HepG2 (cell line): ENCODE measurements at regions of chr14 and their contacts with region 1.

Region 1: DNA sequence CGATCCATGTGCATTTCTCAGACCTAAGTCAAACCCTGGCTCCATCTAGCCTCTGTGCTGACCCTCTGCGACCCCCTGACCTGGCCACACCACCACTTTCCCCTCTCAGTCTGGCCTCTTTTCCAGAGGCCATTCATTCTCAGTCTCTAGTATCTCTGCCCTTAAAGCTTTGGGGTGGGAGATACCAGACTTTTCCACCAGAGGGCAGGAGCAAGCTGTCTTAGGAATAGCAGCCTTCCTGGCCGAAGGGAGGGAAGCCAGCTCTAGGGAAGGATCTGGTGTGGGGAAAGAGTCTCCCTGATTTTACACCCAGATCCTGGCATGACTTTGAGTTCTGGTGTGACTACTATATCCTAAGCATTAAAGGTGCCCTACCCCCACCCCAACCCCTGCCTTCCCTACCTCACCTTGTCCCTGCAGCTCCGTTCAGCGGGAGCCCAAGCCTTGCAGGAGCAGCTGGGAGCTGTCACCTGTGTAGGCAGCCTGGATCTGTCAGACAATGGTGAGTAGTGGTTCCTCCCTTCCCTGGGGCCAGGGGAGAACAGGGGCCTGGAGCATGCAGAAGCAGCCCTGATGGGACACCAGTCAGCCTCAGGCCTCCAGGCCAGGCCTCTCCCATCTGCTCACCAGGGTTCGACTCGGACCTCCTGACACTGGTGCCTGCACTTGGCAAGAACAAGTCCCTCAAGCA is 6.6 kb downstream of the CARMIL3 start:
- DNase-seq: peak; percentile 89
- ATAC-seq: peak; percentile 84
- H3K4me3 ChIP-seq: no peak overlapping the region
- H3K27ac ChIP-seq: no peak overlapping the region
- H3K4me1 ChIP-seq: peaks cover 40% of the 10 kb centered on the region
- H3K27me3 ChIP-seq: peaks cover 19 to 48% of the 10 kb centered on the region in 2 experiments; a peak in 4 of 5 replicates
- CTCF ChIP-seq: peak; percentile 99
- EP300 ChIP-seq: no peak
- POLR2A ChIP-seq: no peak
- RAD21 ChIP-seq: peak; percentile 99

Region 2: GRCh38 chr14:23895480-23895879 is 162.9 kb before region 1 on chr14:
- CTCF ChIA-PET with region 1: no interaction called
- POLR2A ChIA-PET with region 1: no interaction called
- in situ Hi-C with region 1: no loop called
- intact Hi-C with region 1: no loop called
- DNase-seq: peak; percentile 42
- ATAC-seq: peak; percentile 72
- H3K4me3 ChIP-seq: no peak overlapping the region
- H3K27ac ChIP-seq: no peak overlapping the region
- H3K4me1 ChIP-seq: peaks cover 11% of the 10 kb centered on the region
- H3K27me3 ChIP-seq: 0 out of 5 replicates have a peak, but pooled peaks cover 0 to 3% of the 10 kb centered on the region in 2 experiments
- CTCF ChIP-seq: peak; percentile 56
- EP300 ChIP-seq: no peak
- POLR2A ChIP-seq: no peak
- RAD21 ChIP-seq: 0 out of 2 replicates have a peak, but pooled peaks have one; percentile 32

Region 3: DNA sequence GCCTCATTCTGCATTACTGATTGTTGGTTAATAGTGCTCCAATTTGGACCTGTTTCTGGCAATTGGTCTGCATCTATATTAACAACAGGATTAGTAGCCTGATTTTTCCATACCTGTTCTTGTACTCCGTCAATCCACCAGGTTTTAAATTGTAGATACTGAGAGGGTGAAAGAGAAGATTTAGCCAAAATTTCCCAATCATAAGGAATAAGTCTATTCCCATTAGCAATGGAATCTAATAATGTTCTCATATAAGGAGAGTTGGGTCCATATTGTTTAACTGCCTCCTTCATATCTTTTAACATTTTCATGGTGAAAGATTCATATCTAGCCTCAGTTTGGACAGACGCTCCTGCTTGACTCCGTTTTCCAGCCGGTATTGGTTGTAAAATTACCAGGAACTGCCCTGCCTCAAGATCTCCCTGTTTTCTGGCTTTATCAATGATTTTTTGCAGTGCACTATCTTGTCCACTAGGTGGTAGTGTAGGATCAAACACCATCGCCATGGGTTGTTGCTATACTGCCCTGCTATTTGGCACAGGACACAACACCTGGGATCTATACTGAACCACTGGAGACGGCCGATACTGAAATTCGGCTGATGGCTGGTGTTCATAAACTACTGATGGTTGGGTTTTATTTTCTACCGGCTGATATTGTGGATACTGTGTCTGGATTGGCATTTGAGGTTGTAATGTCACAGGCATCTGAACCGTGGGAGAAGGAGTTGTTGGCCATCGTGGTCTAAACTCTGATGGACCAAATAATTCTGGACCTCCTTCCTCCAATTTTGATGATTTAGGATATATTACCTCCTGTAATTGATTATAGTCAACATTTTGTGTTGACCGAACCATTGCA is 44.5 kb before region 1 on chr14:
- CTCF ChIA-PET with region 1: interaction called, 19 read pairs
- POLR2A ChIA-PET with region 1: no interaction called
- in situ Hi-C with region 1: loop called (anchors 5 kb)
- intact Hi-C with region 1: loop called (anchors 2 kb)
- DNase-seq: peak; percentile 92
- ATAC-seq: peak; percentile 98
- H3K4me3 ChIP-seq: no peak overlapping the region
- H3K27ac ChIP-seq: no peak overlapping the region
- H3K4me1 ChIP-seq: peaks cover 53% of the 10 kb centered on the region
- H3K27me3 ChIP-seq: no peaks in the 10 kb centered on the region
- CTCF ChIP-seq: peak; percentile 100
- EP300 ChIP-seq: peak in 1 of 2 experiments; percentile 11; a peak in 1 of 4 replicates
- POLR2A ChIP-seq: no peak
- RAD21 ChIP-seq: peak; percentile 100

Region 4: DNA sequence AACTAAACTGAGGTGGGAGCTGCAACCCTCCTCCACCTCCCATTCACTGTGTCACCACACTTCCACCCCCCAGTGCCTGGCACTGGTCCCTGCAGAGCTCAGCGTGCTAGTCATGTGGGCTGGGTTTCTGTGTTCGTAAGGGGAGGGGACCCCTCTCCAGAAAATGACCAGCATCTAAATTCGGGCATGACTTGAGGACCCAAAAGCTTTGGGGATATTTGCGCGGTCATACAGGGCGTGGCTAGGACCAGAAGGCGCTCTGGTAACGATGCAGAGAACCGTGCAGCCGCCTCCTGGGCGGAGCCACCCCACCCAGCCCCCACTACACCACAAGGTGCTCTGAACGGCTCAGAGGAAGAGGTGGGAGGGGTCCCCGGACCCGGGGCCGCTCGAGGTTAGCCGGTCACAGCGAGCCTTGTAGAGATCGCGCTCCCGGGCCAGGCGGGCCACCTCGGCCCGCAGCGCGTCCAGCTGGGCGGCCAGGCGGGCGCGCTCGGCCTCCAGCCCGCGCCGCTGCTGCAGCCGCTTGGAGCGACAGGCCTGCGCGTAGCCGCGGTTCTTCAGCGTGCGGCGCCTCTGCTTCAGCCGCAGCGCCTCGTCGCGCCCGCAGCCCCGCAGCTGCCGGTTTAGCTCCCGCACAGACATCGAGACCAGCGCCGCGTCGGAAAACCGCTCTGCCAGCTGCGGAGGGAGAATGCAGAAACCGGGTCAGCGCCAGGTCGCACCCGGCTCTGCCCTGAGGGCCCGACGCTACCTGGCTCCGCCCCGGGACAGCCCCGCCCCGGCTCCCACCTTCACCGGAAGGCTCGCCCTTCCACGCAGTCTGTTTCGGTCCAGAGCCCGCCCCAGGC is 22.7 kb after region 1 on chr14:
- CTCF ChIA-PET with region 1: interaction called, 4 read pairs
- POLR2A ChIA-PET with region 1: interaction called, 20 read pairs
- in situ Hi-C with region 1: no loop called
- intact Hi-C with region 1: no loop called
- DNase-seq: peak; percentile 38
- ATAC-seq: peak; percentile 83
- H3K4me3 ChIP-seq: peak overlapping the region; percentile 53 to 77 (median 73)
- H3K27ac ChIP-seq: no peak overlapping the region
- H3K4me1 ChIP-seq: peaks cover 22% of the 10 kb centered on the region
- H3K27me3 ChIP-seq: peaks cover 18 to 81% of the 10 kb centered on the region in 2 experiments
- CTCF ChIP-seq: peak; percentile 2; the same call in 1 of the 2 replicates
- EP300 ChIP-seq: no peak
- POLR2A ChIP-seq: peak in 1 of 2 experiments; percentile 33; a peak in 1 of 4 replicates
- RAD21 ChIP-seq: peak; percentile 55; the same call in 1 of the 2 replicates

Region 5: GRCh38 chr14:24108336-24108874 is 50.0 kb after region 1 on chr14:
- CTCF ChIA-PET with region 1: interaction called, 86 read pairs
- POLR2A ChIA-PET with region 1: interaction called, 62 read pairs
- in situ Hi-C with region 1: no loop called
- intact Hi-C with region 1: loop called (anchors 1 kb)
- DNase-seq: no peak
- ATAC-seq: no peak
- H3K4me3 ChIP-seq: no peak overlapping the region
- H3K27ac ChIP-seq: no peak overlapping the region
- H3K4me1 ChIP-seq: peaks cover 60% of the 10 kb centered on the region
- H3K27me3 ChIP-seq: no peaks in the 10 kb centered on the region
- CTCF ChIP-seq: no peak
- EP300 ChIP-seq: no peak
- POLR2A ChIP-seq: no peak
- RAD21 ChIP-seq: no peak

Region 6: DNA sequence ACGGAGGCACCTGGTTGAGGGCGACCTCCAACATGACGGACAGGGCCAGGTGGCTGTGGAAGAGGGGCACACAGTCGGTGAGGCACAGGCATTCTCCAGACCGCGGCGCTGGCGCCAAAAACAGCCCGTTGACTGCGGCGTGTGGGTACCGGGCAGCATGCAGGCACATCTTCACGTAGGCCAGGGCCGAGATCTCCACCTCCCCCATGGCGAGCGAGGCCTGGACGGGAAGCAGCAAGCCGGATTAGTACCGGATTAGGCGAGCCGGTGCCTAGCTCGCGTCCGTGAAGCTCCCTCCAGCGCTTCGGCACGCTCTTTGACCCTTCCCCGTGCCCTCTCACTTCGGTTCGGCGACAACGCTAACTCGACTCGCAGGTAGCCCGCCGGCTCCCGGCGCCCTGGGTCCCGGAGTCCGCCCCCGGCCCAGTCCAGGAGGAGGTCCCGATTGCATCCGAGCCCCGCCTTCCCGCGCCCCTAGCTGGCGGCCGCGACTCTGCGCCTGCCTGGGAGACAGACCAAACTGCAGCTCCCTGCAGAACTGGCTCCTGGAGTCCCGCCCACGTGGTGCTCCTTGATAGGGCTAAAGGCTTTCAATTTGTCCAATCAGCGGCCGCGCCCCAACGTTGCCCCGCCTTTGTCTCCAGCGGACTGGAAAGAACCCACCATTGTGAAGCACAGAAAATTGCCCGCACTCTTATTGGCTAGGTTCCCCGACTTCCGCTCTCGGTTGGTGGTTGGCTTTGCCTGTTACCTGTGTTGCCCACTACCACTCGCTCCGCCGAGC is 82.9 kb after region 1 on chr14 and contains the start of gene EMC9:
- CTCF ChIA-PET with region 1: no interaction called
- POLR2A ChIA-PET with region 1: interaction called, 11 read pairs
- in situ Hi-C with region 1: no loop called
- intact Hi-C with region 1: no loop called
- DNase-seq: peak; percentile 100
- ATAC-seq: peak; percentile 88
- H3K4me3 ChIP-seq: peak within 1 kb of the TSS; percentile 83 to 99 (median 95)
- H3K27ac ChIP-seq: peak within 1 kb of the TSS; percentile 86
- H3K4me1 ChIP-seq: peaks cover 77% of the 10 kb centered on the region
- H3K27me3 ChIP-seq: peaks cover 0 to 3% of the 10 kb centered on the region in 2 experiments; a peak in 1 of 5 replicates
- CTCF ChIP-seq: peak; percentile 53
- EP300 ChIP-seq: peak in 1 of 2 experiments; percentile 70; a peak in 2 of 4 replicates
- POLR2A ChIP-seq: peak in 1 of 2 experiments; percentile 88; a peak in 2 of 4 replicates
- RAD21 ChIP-seq: peak; percentile 84
- total RNA-seq, gene EMC9: 71.2 and 78.7 TPM in 2 replicates

Region 7: GRCh38 chr14:25322784-25323183 is 1264.4 kb after region 1 on chr14:
- CTCF ChIA-PET with region 1: no interaction called
- POLR2A ChIA-PET with region 1: no interaction called
- in situ Hi-C with region 1: no loop called
- intact Hi-C with region 1: no loop called
- DNase-seq: no peak
- ATAC-seq: no peak
- H3K4me3 ChIP-seq: no peak overlapping the region
- H3K27ac ChIP-seq: no peak overlapping the region
- H3K4me1 ChIP-seq: no peaks in the 10 kb centered on the region
- H3K27me3 ChIP-seq: no peaks in the 10 kb centered on the region
- CTCF ChIP-seq: no peak
- EP300 ChIP-seq: no peak
- POLR2A ChIP-seq: no peak
- RAD21 ChIP-seq: no peak